ENCODE measurements at regions of chr21 and their contacts with region 1.

Region 1: GRCh38 chr21:33947451-33948095 is 32.0 kb upstream of the ATP5PO start:
- DNase-seq: peak; percentile 83
- ATAC-seq: peak; percentile 72
- H3K4me3 ChIP-seq: peak overlapping the region; percentile 46; the same call in 1 of the 2 replicates
- H3K27ac ChIP-seq: peak overlapping the region; percentile 97
- H3K4me1 ChIP-seq: peaks cover 51% of the 10 kb centered on the region
- H3K27me3 ChIP-seq: no peaks in the 10 kb centered on the region
- CTCF ChIP-seq: peak in 1 of 3 experiments; percentile 15; a peak in 1 of 6 replicates
- EP300 ChIP-seq: peak in 1 of 2 experiments; percentile 62; a peak in 3 of 4 replicates
- POLR2A ChIP-seq: no peak; the same call in 1 of the 2 replicates
- RAD21 ChIP-seq: peak; percentile 33; the same call in 1 of the 2 replicates

Region 2: GRCh38 chr21:33801424-33802420 is 145.9 kb before region 1 on chr21:
- CTCF ChIA-PET with region 1: no interaction called
- POLR2A ChIA-PET with region 1: no interaction called
- RAD21 ChIA-PET with region 1: no interaction called
- SMC1A ChIA-PET with region 1: no interaction called
- in situ Hi-C with region 1: no loop called
- intact Hi-C with region 1: no loop called
- DNase-seq: no peak
- ATAC-seq: no peak
- H3K4me3 ChIP-seq: no peak overlapping the region
- H3K27ac ChIP-seq: no peak overlapping the region
- H3K4me1 ChIP-seq: no peaks in the 10 kb centered on the region
- H3K27me3 ChIP-seq: no peaks in the 10 kb centered on the region
- CTCF ChIP-seq: no peak
- EP300 ChIP-seq: no peak
- POLR2A ChIP-seq: no peak
- RAD21 ChIP-seq: no peak

Region 3: GRCh38 chr21:33931799-33932390 is 15.7 kb before region 1 on chr21:
- CTCF ChIA-PET with region 1: interaction called, 4 read pairs
- POLR2A ChIA-PET with region 1: interaction called, 28 read pairs
- RAD21 ChIA-PET with region 1: interaction called, 28 read pairs
- SMC1A ChIA-PET with region 1: interaction called, 31 read pairs
- in situ Hi-C with region 1: no loop called
- intact Hi-C with region 1: no loop called
- DNase-seq: no peak
- ATAC-seq: peak; percentile 27; the same call in 2 of the 3 replicates
- H3K4me3 ChIP-seq: peak overlapping the region; percentile 57; the same call in 1 of the 2 replicates
- H3K27ac ChIP-seq: peak overlapping the region; percentile 43
- H3K4me1 ChIP-seq: no peaks in the 10 kb centered on the region
- H3K27me3 ChIP-seq: no peaks in the 10 kb centered on the region
- CTCF ChIP-seq: no peak
- EP300 ChIP-seq: no peak
- POLR2A ChIP-seq: no peak
- RAD21 ChIP-seq: no peak

Region 4: GRCh38 chr21:33968080-33968994 is 20.8 kb after region 1 on chr21:
- CTCF ChIA-PET with region 1: no interaction called
- POLR2A ChIA-PET with region 1: interaction called, 54 read pairs
- RAD21 ChIA-PET with region 1: interaction called, 182 read pairs
- SMC1A ChIA-PET with region 1: interaction called, 290 read pairs
- in situ Hi-C with region 1: no loop called
- intact Hi-C with region 1: no loop called
- DNase-seq: no peak
- ATAC-seq: peak; percentile 96
- H3K4me3 ChIP-seq: no peak overlapping the region
- H3K27ac ChIP-seq: no peak overlapping the region
- H3K4me1 ChIP-seq: no peaks in the 10 kb centered on the region
- H3K27me3 ChIP-seq: no peaks in the 10 kb centered on the region
- CTCF ChIP-seq: no peak
- EP300 ChIP-seq: no peak
- POLR2A ChIP-seq: no peak
- RAD21 ChIP-seq: no peak

Region 5: GRCh38 chr21:34073032-34073869 is 125.7 kb after region 1 on chr21 and contains the starts of genes MRPS6 and SLC5A3:
- CTCF ChIA-PET with region 1: no interaction called
- POLR2A ChIA-PET with region 1: interaction called, 10 read pairs
- RAD21 ChIA-PET with region 1: interaction called, 20 read pairs
- SMC1A ChIA-PET with region 1: interaction called, 9 read pairs
- in situ Hi-C with region 1: loop called (anchors 5 kb)
- intact Hi-C with region 1: loop called (anchors 2 kb)
- DNase-seq: no peak
- ATAC-seq: peak; percentile 75
- H3K4me3 ChIP-seq: peak within 1 kb of the TSS; percentile 91
- H3K27ac ChIP-seq: peak within 1 kb of the TSS; percentile 72
- H3K4me1 ChIP-seq: peaks cover 11% of the 10 kb centered on the region
- H3K27me3 ChIP-seq: no peaks in the 10 kb centered on the region
- CTCF ChIP-seq: no peak; a peak in 1 of 6 replicates
- EP300 ChIP-seq: no peak; a peak in 1 of 4 replicates
- POLR2A ChIP-seq: peak; percentile 98
- RAD21 ChIP-seq: no peak
- polyA plus RNA-seq, gene MRPS6: 55.6 to 95.2 TPM
- polyA plus RNA-seq, gene SLC5A3: 3.3 to 4.7 TPM

Region 6: GRCh38 chr21:34351786-34352241 is 404.2 kb after region 1 on chr21:
- CTCF ChIA-PET with region 1: interaction called, 10 read pairs
- POLR2A ChIA-PET with region 1: no interaction called
- RAD21 ChIA-PET with region 1: interaction called, 14 read pairs
- SMC1A ChIA-PET with region 1: interaction called, 3 read pairs
- in situ Hi-C with region 1: no loop called
- intact Hi-C with region 1: no loop called
- DNase-seq: peak; percentile 28
- ATAC-seq: peak; percentile 96
- H3K4me3 ChIP-seq: no peak overlapping the region
- H3K27ac ChIP-seq: no peak overlapping the region
- H3K4me1 ChIP-seq: no peaks in the 10 kb centered on the region
- H3K27me3 ChIP-seq: no peaks in the 10 kb centered on the region; a peak in 1 of 4 replicates
- CTCF ChIP-seq: peak; percentile 64 to 88 (median 69)
- EP300 ChIP-seq: no peak
- POLR2A ChIP-seq: no peak
- RAD21 ChIP-seq: peak; percentile 83